Astrocyte of the cerebellum (primary cell): ENCODE measurements at regions of chr17 and their contacts with region 1.

Region 1: GRCh38 chr17:50269477-50270434 is 4.5 kb upstream of the TMEM92 start:
- DNase-seq: peak; percentile 59
- H3K4me3 ChIP-seq: no peak overlapping the region
- CTCF ChIP-seq: peak; percentile 89

Region 2: GRCh38 chr17:50169121-50169764 is 100.5 kb before region 1 on chr17:
- in situ Hi-C with region 1: no loop called
- DNase-seq: peak; percentile 43
- H3K4me3 ChIP-seq: no peak overlapping the region
- CTCF ChIP-seq: peak; percentile 94

Region 3: DNA sequence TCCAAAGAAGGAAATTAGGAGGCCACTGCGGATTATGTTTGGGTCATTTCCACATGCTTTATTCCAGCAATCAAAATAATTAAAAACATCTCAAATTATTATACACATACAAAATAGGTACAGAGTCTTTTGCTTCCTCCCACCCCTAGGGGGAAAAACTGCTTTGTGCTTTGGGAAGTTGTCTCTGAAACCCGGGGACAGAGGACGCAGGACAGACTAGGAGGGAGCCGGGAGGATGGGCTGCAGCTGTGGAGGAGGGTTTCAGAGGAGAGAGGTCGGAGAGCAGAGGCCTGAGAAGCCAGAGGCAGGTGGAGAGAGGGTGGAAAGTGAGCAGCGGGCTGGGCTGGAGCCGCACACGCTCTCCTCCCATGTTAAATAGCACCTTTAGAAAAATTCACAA is 85.7 kb before region 1 on chr17:
- in situ Hi-C with region 1: no loop called
- DNase-seq: no peak
- H3K4me3 ChIP-seq: no peak overlapping the region
- CTCF ChIP-seq: peak; percentile 29

Region 4: DNA sequence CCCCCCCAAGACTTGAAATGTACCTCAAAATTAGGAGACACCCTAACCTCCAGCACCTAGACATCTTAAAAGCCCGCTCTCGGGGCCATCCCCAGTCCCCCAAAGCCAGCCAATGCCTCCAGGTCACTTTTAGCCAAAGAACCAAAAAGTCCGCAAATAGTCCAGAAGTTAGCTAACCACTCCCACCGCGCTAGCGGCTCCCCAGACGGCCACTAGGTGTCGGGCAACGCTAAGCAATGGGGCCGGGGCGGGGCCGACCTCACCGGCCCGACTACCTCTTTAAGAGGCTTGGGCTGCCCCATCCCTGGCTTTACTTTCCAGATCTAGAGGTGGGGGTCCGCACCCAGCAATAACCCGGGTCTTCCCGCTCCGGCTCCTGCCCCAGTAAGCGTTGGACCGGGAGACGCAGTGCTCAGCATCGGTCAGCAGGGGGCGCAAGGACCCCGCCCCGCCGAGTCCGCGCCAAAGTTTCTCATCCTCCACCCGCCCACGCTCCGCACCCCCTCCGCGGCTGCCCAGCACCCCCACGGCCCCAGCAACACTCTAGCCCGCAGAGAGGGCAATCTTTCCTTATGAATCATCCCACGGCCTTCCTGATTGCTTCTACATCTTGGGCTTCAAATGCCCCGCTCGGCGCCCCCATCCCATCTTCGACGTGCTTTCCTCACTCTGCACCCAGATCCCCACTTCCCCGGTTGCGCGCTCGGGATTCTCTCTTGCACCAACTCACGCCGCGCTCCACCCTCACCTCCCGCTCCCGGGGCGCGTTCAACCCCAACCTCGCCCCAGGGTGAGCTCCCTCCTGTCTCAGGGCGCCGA is 69.1 kb before region 1 on chr17:
- in situ Hi-C with region 1: loop called (anchors 5 kb)
- DNase-seq: peak; percentile 93
- H3K4me3 ChIP-seq: peak overlapping the region; percentile 100
- CTCF ChIP-seq: peak; percentile 92

Region 5: GRCh38 chr17:50372758-50373556 is 103.2 kb after region 1 on chr17 and contains the starts of genes EME1 and MRPL27:
- in situ Hi-C with region 1: no loop called
- DNase-seq: peak; percentile 68
- H3K4me3 ChIP-seq: peak within 1 kb of the TSS; percentile 95
- CTCF ChIP-seq: no peak